ENCODE measurements at regions of chr5 and their contacts with region 1.

Region 1: DNA sequence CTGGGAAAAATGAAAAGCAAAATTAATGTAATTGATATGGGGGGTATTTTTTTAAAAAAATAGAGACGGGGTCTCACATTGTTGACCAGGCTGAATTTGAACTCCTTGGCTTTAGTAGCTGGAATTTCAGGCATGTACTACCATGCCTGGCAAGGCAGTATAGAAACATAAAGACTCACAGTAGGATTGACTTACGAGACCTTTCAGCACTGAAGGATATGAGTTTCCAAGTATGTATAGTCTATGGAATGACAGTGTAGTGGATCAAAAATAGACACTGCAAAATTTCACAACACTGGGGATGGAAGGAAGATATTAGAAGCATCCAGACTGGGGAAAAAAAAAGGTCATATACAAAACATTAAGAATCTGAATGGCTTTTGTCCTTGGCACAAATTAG is 6.8 kb downstream of the DCP2 start:
- DNase-seq: no peak
- H3K4me3 ChIP-seq: no peak overlapping the region
- H3K27ac ChIP-seq: no peak overlapping the region
- H3K4me1 ChIP-seq: peaks cover 12 to 50% (median 22%) of the 10 kb centered on the region in 4 donors
- H3K27me3 ChIP-seq: no peaks in the 10 kb centered on the region
- CTCF ChIP-seq: no peak
- EP300 ChIP-seq: no peak
- POLR2A ChIP-seq: no peak

Region 2: GRCh38 chr5:113524927-113525326 is 541.6 kb after region 1 on chr5:
- intact Hi-C with region 1: loop called (anchors 5 kb)
- DNase-seq: no peak
- H3K4me3 ChIP-seq: no peak overlapping the region
- H3K27ac ChIP-seq: no peak overlapping the region
- H3K4me1 ChIP-seq: peaks cover 0 to 23% (median 10%) of the 10 kb centered on the region in 4 donors
- H3K27me3 ChIP-seq: no peaks in the 10 kb centered on the region
- CTCF ChIP-seq: no peak
- EP300 ChIP-seq: no peak
- POLR2A ChIP-seq: no peak